RWPE1 (cell line): ENCODE measurements at regions of chr9 and their contacts with region 1.

Region 1: DNA sequence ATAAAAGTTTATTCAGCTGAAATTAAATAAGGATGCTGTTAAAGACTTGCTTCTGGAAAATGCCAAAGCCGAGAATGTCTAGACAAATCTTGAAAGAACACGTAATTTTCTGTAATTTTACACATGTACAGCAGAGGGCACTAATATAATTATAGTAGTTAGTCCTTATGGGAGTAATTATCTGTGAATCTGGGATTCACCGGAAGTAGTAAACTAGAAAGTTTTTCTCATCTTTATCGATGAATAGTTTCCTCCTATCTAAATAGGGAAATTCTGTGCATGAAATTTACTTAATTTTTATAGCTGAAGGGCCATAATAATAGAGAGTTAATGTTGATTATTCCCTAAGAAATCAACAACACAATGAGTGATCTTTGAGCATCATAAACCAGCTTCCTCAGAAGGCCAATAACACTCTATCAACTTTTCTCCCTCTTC is 18.4 kb upstream of the CNTLN start:
- DNase-seq: peak; percentile 52
- H3K27ac ChIP-seq: no peak overlapping the region
- CTCF ChIP-seq: peak; percentile 81

Region 2: DNA sequence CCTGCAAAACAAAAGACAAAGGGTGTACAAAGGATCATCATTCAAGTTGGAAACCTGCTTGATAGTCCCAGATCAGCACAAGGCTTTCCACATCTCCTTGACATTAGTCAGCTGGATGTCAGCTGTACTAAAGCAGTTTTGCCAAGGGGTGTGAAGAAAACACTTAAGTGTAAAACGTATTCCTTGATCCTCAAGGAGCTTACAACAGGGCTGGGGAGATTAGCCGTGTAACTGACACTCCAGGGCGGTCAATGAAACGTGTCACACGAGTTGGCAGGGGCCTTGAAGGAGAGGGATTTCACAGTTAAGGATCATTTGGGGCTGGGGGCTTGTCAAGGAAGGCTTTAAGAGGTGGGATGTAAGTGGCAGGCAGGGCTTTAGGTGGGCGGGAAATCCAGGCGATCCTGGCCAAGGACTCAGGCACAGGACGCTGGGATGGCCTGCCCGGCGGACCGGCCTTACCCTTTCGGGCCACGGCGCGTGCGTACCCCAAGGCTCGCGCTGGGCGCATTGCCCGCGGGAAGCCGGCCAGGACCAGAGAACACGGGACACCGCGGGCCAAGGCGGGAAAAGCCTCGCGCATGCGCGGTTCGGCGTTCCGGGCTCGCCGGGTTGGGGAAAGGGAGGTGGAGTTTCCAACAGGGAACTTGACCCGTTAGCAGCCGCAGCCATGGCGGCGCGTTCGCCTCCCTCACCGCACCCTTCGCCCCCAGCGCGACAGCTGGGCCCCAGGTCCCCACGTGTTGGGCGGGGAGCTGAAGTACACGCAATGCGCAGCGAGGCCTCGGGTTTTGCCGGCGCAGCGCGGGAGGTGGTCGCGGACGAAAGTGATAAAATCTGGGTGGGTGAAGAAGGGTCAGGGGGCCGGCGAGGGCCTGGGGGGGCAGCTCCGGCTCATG is 18.2 kb after region 1 on chr9 and contains the start of gene CNTLN:
- CTCF ChIA-PET with region 1: interaction called, 10 read pairs
- POLR2A ChIA-PET with region 1: no interaction called
- DNase-seq: peak; percentile 95
- H3K27ac ChIP-seq: peak within 1 kb of the TSS; percentile 85
- CTCF ChIP-seq: no peak

Region 3: GRCh38 chr9:17462869-17463464 is 346.5 kb after region 1 on chr9:
- CTCF ChIA-PET with region 1: interaction called, 17 read pairs
- POLR2A ChIA-PET with region 1: no interaction called
- DNase-seq: peak; percentile 18
- H3K27ac ChIP-seq: no peak overlapping the region
- CTCF ChIP-seq: peak; percentile 90